ENCODE measurements at regions of chr1 and their contacts with region 1.

Region 1: DNA sequence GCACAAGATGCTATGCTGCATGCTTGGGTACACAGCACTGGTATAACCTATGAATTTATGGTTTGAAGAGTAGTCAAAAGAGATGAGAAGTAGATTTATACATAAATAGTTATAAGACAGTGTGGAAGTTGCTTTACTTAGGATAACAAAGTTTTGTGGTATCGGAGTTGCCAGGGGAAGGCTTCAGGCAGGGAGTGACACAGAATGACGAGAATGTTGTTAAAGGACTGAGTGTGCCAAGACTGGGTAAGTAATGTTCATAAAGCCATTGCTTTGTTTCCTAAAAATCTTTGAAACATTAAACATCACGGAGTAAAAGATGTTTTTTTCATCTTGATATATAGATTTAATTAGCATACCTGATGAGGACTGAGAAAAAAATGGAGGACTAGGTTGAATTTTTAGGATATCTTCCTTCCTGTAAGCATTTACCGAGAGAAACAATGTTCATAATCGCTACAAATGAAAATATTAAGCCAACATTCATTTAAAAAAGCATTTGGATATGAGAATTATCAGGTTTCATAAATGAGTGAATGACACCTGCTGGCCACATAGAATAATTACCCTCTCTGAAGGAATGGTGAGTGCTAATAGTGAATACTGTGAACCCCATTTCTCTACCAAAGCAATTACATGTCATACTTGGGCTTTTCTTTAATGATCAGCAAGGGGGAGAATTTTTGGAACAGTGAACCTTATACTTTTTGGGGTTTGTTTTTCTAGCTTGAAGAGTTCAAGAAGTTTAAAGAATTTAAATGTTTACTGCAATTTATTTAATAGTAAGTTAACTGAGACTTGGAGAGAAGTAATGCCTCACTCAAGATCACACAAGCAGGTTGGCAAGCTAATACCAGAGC is 28.4 kb downstream of the EXTL2 start:
- DNase-seq: no peak
- H3K4me3 ChIP-seq: no peak overlapping the region
- H3K27ac ChIP-seq: no peak overlapping the region
- H3K27me3 ChIP-seq: no peaks in the 10 kb centered on the region
- CTCF ChIP-seq: peak; percentile 60

Region 2: GRCh38 chr1:99808391-99809115 is 1057.7 kb before region 1 on chr1:
- CTCF ChIA-PET with region 1: interaction called, 11 read pairs
- POLR2A ChIA-PET with region 1: no interaction called
- DNase-seq: peak; percentile 91
- H3K4me3 ChIP-seq: peak overlapping the region; percentile 33; the same call in 1 of the 2 replicates
- H3K27ac ChIP-seq: no peak overlapping the region
- H3K27me3 ChIP-seq: no peaks in the 10 kb centered on the region
- CTCF ChIP-seq: peak; percentile 62

Region 3: GRCh38 chr1:100497796-100498195 is 368.5 kb before region 1 on chr1:
- CTCF ChIA-PET with region 1: interaction called, 13 read pairs
- POLR2A ChIA-PET with region 1: no interaction called
- DNase-seq: no peak
- H3K4me3 ChIP-seq: no peak overlapping the region
- H3K27ac ChIP-seq: no peak overlapping the region
- H3K27me3 ChIP-seq: no peaks in the 10 kb centered on the region
- CTCF ChIP-seq: no peak

Region 4: DNA sequence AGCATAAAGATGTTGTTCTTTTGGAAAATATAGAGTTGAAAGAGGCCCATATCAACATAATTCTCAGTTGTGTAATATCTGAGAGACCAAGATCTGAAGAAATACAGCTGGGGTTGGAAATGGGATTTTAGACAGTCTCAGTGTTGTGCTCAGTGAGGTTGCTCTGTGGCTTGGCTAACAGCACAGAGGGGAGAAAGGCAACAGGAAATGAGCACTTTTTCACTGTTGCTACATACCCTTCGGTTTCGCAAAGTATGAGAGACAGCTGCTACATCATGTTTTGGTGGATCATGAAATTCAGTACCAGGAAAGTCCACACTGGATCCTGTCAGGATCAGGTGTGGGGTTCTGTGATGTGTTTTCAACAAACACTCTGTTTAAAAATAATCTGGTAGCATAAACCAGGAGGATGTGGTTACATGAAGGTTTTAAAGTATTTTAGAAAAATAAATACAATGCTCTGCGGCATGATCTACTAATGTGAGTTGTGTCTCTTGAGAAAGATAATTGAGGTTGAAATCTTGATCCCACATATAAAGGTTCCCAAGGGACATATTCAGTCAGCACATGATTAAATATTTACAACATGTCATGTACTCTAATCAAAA is 335.3 kb before region 1 on chr1:
- CTCF ChIA-PET with region 1: interaction called, 31 read pairs
- POLR2A ChIA-PET with region 1: no interaction called
- DNase-seq: peak; percentile 37
- H3K4me3 ChIP-seq: no peak overlapping the region
- H3K27ac ChIP-seq: no peak overlapping the region
- H3K27me3 ChIP-seq: peaks cover 4% of the 10 kb centered on the region
- CTCF ChIP-seq: no peak

Region 5: DNA sequence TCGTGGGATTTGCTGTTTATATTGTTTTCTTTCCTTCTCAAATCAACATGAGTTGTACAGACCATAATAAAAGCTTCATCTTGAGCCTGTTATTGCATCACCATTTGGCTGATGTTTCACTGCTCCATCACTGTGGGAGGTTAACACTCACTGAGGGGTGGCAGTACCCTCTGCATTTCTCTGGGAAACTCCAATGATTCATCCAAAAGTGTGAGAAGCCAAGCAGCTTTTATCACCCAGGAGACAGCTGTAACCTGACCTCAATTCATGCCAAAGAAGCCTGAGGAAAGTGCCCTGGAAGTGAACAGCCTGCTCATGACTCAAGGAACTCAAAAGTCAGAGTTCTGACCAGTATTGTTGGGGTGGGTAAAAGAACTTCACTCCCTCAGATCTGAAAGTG is 244.2 kb before region 1 on chr1:
- CTCF ChIA-PET with region 1: interaction called, 15 read pairs
- POLR2A ChIA-PET with region 1: no interaction called
- DNase-seq: peak; percentile 92
- H3K4me3 ChIP-seq: no peak overlapping the region
- H3K27ac ChIP-seq: peak overlapping the region; percentile 96
- H3K27me3 ChIP-seq: no peaks in the 10 kb centered on the region
- CTCF ChIP-seq: no peak

Region 6: DNA sequence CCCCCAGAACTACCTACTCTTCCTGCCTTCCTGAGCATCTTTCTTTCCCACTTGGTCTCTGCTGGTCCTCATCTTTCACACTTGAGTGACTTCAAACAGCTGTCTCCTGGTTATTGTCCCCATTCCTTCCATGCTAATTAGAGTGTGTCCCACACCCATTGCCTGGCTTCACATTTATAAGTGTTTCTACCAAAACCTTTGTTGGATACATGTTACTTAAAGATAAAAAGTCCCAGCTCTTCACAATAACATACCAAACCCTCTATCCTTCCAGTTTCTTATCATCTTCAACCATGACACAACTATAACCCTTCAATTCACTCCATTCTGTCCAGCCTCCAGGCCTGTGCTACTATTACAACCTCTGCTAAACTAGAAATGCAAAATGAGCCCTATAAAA is 105.8 kb before region 1 on chr1:
- CTCF ChIA-PET with region 1: no interaction called
- POLR2A ChIA-PET with region 1: no interaction called
- DNase-seq: no peak
- H3K4me3 ChIP-seq: no peak overlapping the region
- H3K27ac ChIP-seq: no peak overlapping the region
- H3K27me3 ChIP-seq: no peaks in the 10 kb centered on the region
- CTCF ChIP-seq: no peak

Region 7: DNA sequence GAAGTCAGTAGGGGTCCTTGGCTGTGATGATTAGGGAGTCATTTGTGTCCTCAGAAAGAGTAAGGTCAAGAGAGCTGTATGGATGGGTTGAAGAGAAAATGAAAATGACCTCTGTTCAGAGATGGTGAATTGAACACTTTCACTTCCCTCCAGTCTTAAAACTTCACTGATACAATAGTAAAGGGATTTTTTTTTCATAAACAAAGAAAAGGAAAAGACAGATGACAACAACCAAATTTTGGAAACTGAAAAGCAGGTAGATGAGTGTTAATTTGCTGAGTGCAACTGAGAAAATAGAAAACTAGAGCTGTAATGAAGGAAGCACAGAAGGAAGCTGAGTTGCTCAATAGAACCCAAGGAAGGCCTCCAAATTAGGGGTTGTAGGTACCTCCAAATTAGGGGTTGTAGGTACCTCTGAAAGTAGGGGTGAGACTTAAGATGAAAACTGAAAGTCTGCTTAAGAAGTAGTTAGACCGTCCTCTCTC is 355.7 kb after region 1 on chr1:
- CTCF ChIA-PET with region 1: no interaction called
- POLR2A ChIA-PET with region 1: no interaction called
- DNase-seq: no peak
- H3K4me3 ChIP-seq: no peak overlapping the region
- H3K27ac ChIP-seq: no peak overlapping the region
- H3K27me3 ChIP-seq: peaks cover 2% of the 10 kb centered on the region
- CTCF ChIP-seq: no peak

Measured in AG04450 (cell line).